ENCODE measurements at regions of chr13 and their contacts with region 1.

Region 1: GRCh38 chr13:113393563-113394338 is 29.8 kb upstream of the GRTP1 start:
- DNase-seq: peak; percentile 80 to 86 (median 85)
- ATAC-seq: peak; percentile 88 to 97 (median 93)
- H3K4me3 ChIP-seq: peak overlapping the region; percentile 76 to 90 (median 87)
- H3K27ac ChIP-seq: peak overlapping the region; percentile 44 to 78 (median 60)
- H3K4me1 ChIP-seq: peaks cover 0 to 8% (median 3%) of the 10 kb centered on the region in 4 donors
- H3K27me3 ChIP-seq: no peaks in the 10 kb centered on the region
- CTCF ChIP-seq: peak; percentile 81 to 96 (median 92)
- POLR2A ChIP-seq: peak; percentile 33

Region 2: DNA sequence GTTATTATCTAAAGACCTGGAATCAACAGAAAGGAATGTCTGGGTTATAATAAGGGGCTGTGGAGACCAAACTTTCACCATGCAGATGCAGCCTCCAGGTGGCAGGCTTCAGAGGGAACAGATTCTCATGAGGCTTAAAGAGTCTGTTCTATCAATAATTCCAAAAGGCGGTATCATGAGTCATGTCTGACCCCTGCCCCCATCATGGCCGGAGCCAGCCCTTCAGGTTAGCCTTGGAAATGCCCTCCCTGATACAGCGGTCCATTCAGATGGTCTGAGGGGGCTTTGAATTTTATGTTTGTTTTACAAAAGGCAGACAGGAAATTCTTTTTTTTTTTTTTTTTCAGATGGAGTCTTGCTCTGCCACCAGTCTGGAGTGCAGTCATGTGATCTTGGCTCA is 118.4 kb before region 1 on chr13:
- intact Hi-C with region 1: loop called in 1 of 2 experiments (anchors 10 kb)
- DNase-seq: peak; percentile 59 to 69 (median 68)
- ATAC-seq: peak; percentile 90 to 97 (median 95)
- H3K4me3 ChIP-seq: no peak overlapping the region
- H3K27ac ChIP-seq: no peak overlapping the region
- H3K4me1 ChIP-seq: no peaks in the 10 kb centered on the region
- H3K27me3 ChIP-seq: no peaks in the 10 kb centered on the region
- CTCF ChIP-seq: peak; percentile 66 to 75 (median 73)
- POLR2A ChIP-seq: no peak

Measured in right lobe of liver (tissue), 6 donors.